Activated CD4-positive, alpha-beta T cell treated with anti-CD3 and anti-CD28 coated beads, Interleukin-2, amount 10 ng/mL, durations not matched to agents 24 days and 14 days (primary cell): ENCODE measurements at regions of chr1 and their contacts with region 1.

Region 1: DNA sequence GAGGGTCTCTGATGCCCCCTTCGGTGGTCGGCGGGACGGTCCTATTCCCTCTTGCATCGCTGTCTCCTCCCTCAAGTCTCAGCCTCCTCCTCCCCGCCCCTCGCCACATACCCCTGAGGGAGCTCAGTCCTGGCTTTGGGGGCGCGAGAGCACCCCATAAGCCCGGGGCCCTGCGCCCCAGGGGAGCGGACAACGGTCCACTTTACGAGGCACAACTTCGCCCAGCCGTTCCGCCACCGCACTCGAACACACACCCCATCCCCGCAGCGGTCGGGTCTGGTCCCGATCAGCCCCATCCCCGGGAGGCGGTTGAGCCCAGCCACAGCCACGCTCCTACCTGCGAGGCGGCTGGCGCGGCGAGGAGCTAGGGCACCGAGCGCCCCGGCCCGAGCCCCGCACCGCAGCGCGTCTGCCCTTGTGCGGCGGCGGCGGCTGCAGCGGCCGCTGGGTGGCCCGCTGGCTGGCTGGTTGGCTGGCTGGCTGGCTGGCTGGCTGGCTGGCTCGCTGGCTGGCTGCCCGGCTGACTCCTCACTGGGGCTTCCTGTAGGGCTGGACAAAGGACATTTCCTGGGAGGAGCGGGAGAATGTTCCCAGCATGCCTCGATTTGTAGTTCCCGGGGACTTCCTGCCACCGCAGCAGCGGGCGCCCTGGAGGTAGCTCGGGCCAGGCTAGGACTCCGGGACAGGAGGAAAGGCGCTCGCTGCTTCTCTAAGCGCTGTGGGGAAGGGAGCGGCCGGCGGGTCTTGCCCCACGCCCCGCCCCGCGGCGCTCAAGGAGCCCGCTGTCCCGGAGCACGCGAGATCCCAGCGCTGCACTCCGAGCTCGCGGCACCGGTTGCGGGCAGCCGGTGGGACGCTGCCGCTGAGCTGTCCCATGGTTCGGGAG is at the start of gene ZNF697:
- DNase-seq: peak; percentile 81
- H3K4me3 Mint-ChIP-seq: peak within 1 kb of the TSS; percentile 88
- H3K27ac Mint-ChIP-seq: peak within 1 kb of the TSS; percentile 58
- H3K4me1 Mint-ChIP-seq: peaks cover 29% of the 10 kb centered on the region
- H3K27me3 Mint-ChIP-seq: peaks cover 81% of the 10 kb centered on the region
- total RNA-seq, gene ZNF697: 4.5 and 4.8 TPM in 2 replicates

Region 2: DNA sequence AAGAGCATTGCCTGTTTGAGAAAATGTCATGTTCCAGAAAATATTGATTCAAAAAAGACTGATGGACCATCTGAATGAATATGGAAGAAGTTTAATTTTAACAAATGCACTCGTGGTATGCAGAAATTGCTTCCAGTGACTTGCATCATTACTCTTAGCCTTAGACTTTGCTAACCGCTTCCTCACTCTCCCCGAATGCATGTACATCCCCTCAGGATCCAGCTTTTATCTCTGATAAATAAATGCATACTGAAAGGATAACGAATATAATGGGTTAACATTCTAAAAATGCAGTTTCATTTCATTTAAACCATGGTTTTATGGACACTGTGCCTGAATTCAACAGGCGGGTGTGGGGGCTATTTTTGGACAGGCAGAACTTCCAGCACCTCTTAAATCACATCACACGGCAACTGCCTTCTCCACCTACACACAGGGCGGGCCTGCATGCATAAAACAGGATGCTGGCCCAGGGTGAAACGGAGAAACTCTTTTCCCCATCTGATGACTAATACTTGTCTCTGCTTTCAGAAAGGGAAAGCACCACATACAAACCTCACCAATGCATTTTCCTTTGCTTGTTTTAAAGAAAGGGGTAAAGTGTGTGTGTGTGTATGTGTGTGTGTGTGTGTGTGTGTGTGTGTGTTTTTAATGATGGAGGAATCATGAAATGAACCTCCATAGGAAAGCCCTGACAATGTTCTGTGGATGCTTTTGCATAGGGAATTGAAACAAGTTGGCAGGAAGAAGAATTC is 1511.6 kb before region 1 on chr1:
- intact Hi-C with region 1: loop called (anchors 5 kb)
- DNase-seq: peak; percentile 73
- H3K4me3 Mint-ChIP-seq: no peak overlapping the region
- H3K27ac Mint-ChIP-seq: no peak overlapping the region
- H3K4me1 Mint-ChIP-seq: peaks cover 6% of the 10 kb centered on the region
- H3K27me3 Mint-ChIP-seq: peaks cover 18% of the 10 kb centered on the region

Region 3: DNA sequence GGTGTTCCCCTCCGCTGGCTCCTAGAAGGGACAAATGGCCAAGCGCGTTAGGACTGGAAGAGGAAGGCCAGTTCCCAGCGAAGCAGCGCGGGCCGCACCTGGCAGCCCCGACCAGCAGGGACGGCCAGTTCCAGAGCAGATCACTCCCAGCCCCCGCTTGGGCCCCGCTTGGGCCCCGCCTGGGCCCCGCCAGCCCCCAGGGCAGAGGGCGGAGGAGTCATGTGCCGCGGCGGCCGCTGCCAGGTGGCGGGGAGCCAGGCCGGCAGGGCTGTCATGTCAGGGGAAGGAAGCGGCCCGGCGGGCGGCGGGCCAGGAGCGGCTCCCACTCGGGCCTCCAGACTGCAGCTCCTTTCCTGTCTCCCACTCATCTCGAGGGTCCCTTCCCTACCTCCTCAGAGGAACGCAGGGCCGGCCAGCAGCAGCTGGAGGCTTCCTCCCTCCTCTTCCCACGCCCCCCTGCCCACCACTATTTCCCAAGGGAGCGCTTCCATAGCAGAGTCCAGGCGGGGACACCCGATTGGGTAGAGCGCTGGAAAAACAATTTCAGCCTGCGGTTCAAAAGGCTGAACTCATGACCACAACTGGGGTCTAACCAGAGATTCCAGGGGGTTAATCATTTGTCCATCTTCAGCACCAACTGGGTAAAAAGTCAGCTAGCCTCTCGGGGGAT is 16.4 kb before region 1 on chr1:
- intact Hi-C with region 1: no loop called
- DNase-seq: no peak
- H3K4me3 Mint-ChIP-seq: no peak overlapping the region
- H3K27ac Mint-ChIP-seq: no peak overlapping the region
- H3K4me1 Mint-ChIP-seq: peaks cover 4% of the 10 kb centered on the region
- H3K27me3 Mint-ChIP-seq: peaks cover 64% of the 10 kb centered on the region